ENCODE measurements at regions of chr12 and their contacts with region 1.

Region 1: DNA sequence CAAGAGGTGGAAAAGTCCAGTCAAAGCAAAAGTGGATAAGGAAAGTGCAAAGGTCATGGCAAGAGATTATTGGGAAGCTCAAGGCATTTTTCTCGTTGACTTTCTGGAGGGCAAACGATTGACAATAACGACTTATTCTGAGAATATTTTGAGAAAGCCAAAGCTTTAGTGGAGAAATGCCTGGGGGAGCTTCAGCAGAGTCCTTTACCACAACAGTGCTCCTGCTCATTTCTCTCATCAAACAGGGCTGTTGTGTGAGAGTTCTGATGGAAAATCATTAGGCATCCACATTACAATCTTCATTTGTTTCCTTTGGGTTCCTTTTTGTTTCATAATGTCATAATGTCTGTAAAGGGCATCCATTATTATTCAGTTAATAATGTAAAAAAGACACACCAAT is 26.9 kb downstream of the PRB3 start:
- DNase-seq: no peak
- CTCF ChIP-seq: no peak

Region 2: GRCh38 chr12:11228296-11228879 is 14.3 kb before region 1 on chr12:
- CTCF ChIA-PET with region 1: interaction called, 10 read pairs
- POLR2A ChIA-PET with region 1: no interaction called
- DNase-seq: peak; percentile 24
- CTCF ChIP-seq: peak; percentile 72

Region 3: DNA sequence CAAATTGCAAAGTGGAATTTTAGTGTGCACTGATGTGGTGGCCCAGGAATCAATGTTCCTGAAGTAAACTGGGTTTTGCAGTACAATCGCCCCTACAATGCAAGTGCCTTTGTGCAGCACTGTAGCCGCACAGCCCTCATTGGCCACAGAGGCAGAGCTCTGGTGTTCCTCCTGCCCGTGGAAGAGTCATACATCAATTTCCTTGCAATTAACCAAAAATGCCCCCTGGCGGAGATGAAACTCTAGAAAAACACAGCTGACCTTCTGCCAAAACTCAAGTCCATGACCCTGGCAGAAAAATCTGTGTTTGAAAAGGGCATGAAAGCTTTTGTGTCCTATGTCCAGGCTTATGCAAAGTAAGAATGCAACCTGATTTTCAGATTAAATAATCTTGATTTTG is 270.6 kb after region 1 on chr12:
- CTCF ChIA-PET with region 1: no interaction called
- POLR2A ChIA-PET with region 1: no interaction called
- DNase-seq: no peak
- CTCF ChIP-seq: no peak

Measured in GM10248 (cell line).